Panc1 (cell line): ENCODE measurements at regions of chr11 and their contacts with region 1.

Region 1: GRCh38 chr11:19951558-19952115 is 208.6 kb downstream of the DBX1 start:
- DNase-seq: peak; percentile 25
- ATAC-seq: peak; percentile 59
- H3K4me3 ChIP-seq: no peak overlapping the region
- H3K27ac ChIP-seq: 0 out of 2 replicates have a peak overlapping the region, but pooled peaks have one; percentile 29
- H3K4me1 ChIP-seq: peaks cover 4% of the 10 kb centered on the region
- H3K27me3 ChIP-seq: no peaks in the 10 kb centered on the region
- CTCF ChIP-seq: peak; percentile 73

Region 2: DNA sequence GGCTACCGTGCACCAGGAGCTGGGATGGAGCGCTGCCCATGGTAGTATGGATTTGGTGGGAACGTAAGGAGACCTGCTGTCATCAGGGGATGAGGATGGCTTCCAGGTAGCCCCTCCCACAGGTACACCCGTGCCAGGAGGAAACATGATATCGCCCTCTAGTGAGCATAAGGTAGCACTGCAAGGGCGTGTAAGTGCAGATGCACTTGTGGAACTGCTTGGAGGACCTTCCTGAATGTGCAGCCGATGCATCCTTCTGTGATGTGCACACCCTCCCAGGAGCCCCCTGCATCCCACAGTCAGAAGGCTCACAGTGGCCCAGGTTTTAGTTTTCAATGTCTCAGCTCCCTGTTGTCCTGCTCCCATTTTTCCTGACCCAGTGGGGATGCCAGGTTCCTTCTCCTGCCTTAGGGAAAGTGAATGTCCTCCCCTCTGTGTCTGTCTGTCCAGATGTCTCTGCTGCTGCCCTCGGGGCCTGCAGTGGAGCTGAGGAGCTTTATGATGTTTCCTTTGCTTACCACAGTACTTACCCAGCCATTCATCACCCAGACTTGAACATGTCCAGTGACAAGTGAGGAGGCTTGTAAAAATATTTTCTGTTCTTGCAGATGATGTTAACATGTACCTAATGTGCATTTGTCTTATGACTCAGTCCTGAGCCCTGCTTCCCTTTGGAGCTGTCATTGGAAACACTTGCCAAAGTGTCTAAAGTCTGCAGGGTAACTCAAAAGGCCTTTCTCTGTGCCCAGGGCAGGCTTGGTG is 159.5 kb after region 1 on chr11:
- CTCF ChIA-PET with region 1: no interaction called
- POLR2A ChIA-PET with region 1: no interaction called
- in situ Hi-C with region 1: no loop called
- intact Hi-C with region 1: loop called (anchors 2 kb)
- DNase-seq: peak; percentile 60
- ATAC-seq: peak; percentile 72
- H3K4me3 ChIP-seq: no peak overlapping the region
- H3K27ac ChIP-seq: no peak overlapping the region
- H3K4me1 ChIP-seq: peaks cover 18% of the 10 kb centered on the region
- H3K27me3 ChIP-seq: no peaks in the 10 kb centered on the region
- CTCF ChIP-seq: peak; percentile 93

Region 3: DNA sequence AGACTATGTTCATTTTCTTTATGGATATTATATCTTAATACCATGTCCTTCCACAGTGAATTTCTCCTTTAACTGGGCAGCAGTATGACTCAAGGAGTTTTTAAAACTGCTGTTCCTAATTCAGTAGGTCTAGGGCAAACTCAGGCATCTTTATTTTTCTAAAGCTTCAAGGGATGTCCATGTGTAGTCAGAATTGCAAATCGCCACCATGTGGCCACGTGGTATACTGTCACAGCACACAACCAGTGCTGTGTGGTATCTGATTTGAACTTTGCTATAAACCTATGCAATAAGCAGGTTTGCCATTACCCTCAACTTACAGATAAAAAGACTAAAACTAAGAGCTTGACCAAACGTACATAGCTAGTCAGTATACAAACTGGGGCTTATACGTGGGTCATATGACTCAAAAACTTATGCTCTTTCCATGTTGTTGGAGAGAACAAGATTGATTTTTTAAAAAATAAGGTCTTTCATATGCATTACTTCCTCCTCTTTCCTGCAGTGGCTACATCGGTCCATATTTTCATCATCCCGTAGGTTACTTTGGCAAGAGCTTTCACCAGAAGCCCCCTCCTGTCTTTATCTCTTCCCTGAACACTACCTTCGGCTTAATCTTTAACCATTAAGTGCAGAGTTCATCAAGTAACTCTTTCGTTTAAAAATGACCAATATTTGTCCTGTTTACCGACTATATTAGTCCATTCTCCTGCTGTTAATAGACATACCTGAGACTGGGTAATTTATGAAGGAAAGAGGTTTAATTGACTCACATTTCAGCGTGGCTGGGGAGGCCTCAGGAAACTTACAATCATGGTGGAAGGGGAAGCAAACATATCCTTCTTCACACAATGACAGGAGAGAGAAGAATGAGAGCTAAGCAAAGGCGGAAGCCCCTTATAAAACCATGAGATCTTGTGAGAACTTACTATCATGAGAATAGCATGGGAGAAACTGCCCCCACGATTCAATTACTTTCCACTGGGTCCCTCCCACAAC is 403.9 kb after region 1 on chr11:
- CTCF ChIA-PET with region 1: no interaction called
- POLR2A ChIA-PET with region 1: no interaction called
- in situ Hi-C with region 1: no loop called
- intact Hi-C with region 1: loop called (anchors 10 kb)
- DNase-seq: no peak
- ATAC-seq: peak; percentile 90
- H3K4me3 ChIP-seq: no peak overlapping the region
- H3K27ac ChIP-seq: no peak overlapping the region
- H3K4me1 ChIP-seq: peaks cover under 1% of the 10 kb centered on the region
- H3K27me3 ChIP-seq: no peaks in the 10 kb centered on the region
- CTCF ChIP-seq: peak; percentile 74